ENCODE measurements at regions of chr11 and their contacts with region 1.

Region 1: DNA sequence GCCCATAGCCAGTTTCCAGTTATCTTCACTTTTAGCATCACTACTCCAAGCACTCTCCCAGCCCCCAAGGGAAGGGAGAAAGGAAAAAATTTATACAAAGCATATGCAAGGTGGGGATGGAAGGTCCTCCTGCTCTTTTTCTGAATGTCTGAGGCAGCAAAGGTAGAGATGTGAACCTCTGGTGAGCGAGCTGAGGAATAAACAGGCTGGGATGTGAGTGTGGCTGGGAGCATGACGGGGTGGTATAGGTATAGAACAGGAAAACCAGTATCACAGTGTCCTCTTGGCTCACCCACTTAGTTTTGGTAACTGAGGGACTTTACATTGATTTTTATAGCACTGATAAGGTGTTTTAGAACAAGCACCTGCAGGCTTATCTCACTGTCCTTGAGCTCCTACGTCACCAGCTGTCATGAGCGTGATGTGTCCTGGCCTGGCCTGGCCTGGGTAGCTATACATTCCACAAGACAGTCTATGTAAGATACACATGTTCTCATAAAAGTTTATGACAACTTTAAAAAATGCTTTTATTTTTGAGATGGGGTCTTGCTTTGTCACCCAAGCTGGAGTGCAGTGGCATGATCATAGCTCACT is 10.3 kb upstream of the POLD3 start:
- DNase-seq: peak in 1 of 4 experiments; percentile 20
- ATAC-seq: peak; percentile 65
- H3K4me3 ChIP-seq: no peak overlapping the region
- H3K27ac ChIP-seq: no peak overlapping the region
- H3K4me1 ChIP-seq: no peaks in the 10 kb centered on the region; a peak in 1 of 5 replicates
- H3K27me3 ChIP-seq: peaks cover 5 to 15% of the 10 kb centered on the region in 2 experiments; a peak in 4 of 5 replicates
- CTCF ChIP-seq: no peak
- EP300 ChIP-seq: no peak
- POLR2A ChIP-seq: no peak
- RAD21 ChIP-seq: no peak

Region 2: GRCh38 chr11:74462009-74462408 is 120.0 kb before region 1 on chr11:
- CTCF ChIA-PET with region 1: no interaction called
- POLR2A ChIA-PET with region 1: interaction called, 3 read pairs
- in situ Hi-C with region 1: loop called (anchors 5 kb)
- intact Hi-C with region 1: no loop called
- DNase-seq: peak; percentile 58 to 84 (median 70)
- ATAC-seq: peak; percentile 87
- H3K4me3 ChIP-seq: peak overlapping the region; percentile 32
- H3K27ac ChIP-seq: peak overlapping the region; percentile 72
- H3K4me1 ChIP-seq: peaks cover 37 to 52% of the 10 kb centered on the region in 2 experiments
- H3K27me3 ChIP-seq: no peaks in the 10 kb centered on the region
- CTCF ChIP-seq: no peak
- EP300 ChIP-seq: no peak
- POLR2A ChIP-seq: no peak
- RAD21 ChIP-seq: peak in 1 of 2 experiments; percentile 18; a peak in 1 of 4 replicates

Region 3: DNA sequence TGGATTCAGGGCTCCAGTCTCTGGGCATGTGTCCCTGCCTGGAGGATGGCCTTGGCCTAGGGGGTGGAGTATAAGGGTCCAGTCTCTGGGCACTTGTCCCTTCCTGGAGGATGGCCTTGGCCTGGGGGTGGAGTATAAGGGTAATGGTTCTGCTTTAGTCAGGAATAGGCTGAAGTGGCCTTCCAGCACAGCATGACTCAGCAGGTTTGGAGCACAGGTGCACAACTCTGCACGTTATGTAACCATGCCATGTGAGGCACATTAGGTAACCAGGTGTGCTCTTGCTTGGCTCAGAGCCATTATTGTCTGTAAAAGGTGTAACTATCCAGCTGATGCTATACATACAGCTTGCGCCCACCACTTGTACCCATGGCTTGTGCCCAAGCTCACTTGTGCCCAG is 38.1 kb before region 1 on chr11:
- CTCF ChIA-PET with region 1: no interaction called
- POLR2A ChIA-PET with region 1: no interaction called
- in situ Hi-C with region 1: no loop called
- intact Hi-C with region 1: no loop called
- DNase-seq: no peak
- ATAC-seq: no peak
- H3K4me3 ChIP-seq: no peak overlapping the region
- H3K27ac ChIP-seq: no peak overlapping the region
- H3K4me1 ChIP-seq: no peaks in the 10 kb centered on the region
- H3K27me3 ChIP-seq: peaks cover 10 to 46% of the 10 kb centered on the region in 2 experiments; a peak in 4 of 5 replicates
- CTCF ChIP-seq: no peak
- EP300 ChIP-seq: no peak
- POLR2A ChIP-seq: no peak
- RAD21 ChIP-seq: no peak

Region 4: GRCh38 chr11:74615311-74615710 is 33.3 kb after region 1 on chr11:
- CTCF ChIA-PET with region 1: no interaction called
- POLR2A ChIA-PET with region 1: no interaction called
- in situ Hi-C with region 1: no loop called
- intact Hi-C with region 1: no loop called
- DNase-seq: peak in 2 of 4 experiments; percentile 42 to 51
- ATAC-seq: peak; percentile 89
- H3K4me3 ChIP-seq: no peak overlapping the region
- H3K27ac ChIP-seq: peak overlapping the region; percentile 9; the same call in 2 of the 3 replicates
- H3K4me1 ChIP-seq: peaks cover 0 to 2% of the 10 kb centered on the region in 2 experiments; a peak in 1 of 5 replicates
- H3K27me3 ChIP-seq: no peaks in the 10 kb centered on the region
- CTCF ChIP-seq: no peak
- EP300 ChIP-seq: peak; percentile 35; the same call in 1 of the 2 replicates
- POLR2A ChIP-seq: no peak
- RAD21 ChIP-seq: no peak

Measured in K562 (cell line).